MCF 10A (cell line): ENCODE measurements at regions of chr1 and their contacts with region 1.

Region 1: GRCh38 chr1:156456622-156457465 is 43.7 kb downstream of the MEF2D start:
- DNase-seq: peak; percentile 100
- H3K4me3 Mint-ChIP-seq: peak overlapping the region; percentile 90
- H3K27ac Mint-ChIP-seq: peak overlapping the region; percentile 99
- H3K4me1 Mint-ChIP-seq: peaks cover 42% of the 10 kb centered on the region
- H3K27me3 Mint-ChIP-seq: no peaks in the 10 kb centered on the region
- CTCF ChIP-seq: no peak

Region 2: DNA sequence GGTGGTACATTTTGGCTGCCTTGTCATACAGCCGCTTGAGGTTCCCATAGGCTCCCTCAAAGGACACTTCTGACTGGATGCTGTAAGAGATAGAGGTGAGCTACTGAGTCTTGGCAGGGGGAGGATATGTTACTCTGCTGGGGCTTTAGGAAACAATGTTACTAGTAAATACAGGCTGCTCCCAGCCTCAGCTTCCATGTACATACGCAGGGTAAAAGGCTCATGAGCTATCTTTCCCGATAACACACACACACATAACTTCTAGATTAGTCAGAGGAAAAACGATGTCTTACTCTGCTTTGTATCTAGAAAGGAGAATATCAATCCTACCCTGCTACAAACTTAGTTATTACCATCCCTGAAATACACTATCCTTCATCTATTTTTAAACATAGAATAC is 188.5 kb before region 1 on chr1:
- CTCF ChIA-PET with region 1: no interaction called
- POLR2A ChIA-PET with region 1: no interaction called
- intact Hi-C with region 1: no loop called
- DNase-seq: no peak
- H3K4me3 Mint-ChIP-seq: no peak overlapping the region
- H3K27ac Mint-ChIP-seq: no peak overlapping the region
- H3K4me1 Mint-ChIP-seq: peaks cover 23% of the 10 kb centered on the region
- H3K27me3 Mint-ChIP-seq: no peaks in the 10 kb centered on the region
- CTCF ChIP-seq: no peak

Region 3: DNA sequence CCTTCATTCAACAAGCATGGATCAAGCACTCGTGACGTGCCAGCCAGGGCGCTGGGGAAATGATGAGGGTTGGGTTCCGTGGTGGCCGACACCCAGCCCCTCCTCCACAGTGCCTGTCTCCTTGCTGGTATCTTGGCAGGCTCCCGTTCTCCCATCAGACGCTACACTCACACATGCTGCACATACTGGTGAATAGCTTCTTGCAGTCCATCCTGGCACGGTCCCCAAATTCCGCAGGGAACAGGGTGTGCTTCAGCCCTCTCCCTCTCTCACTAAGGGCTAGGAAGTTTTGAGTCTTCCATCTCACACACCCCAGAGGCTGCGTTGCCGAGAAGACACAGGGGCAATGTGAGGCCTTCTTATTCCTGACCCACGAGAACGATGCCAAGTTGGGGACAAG is 53.9 kb after region 1 on chr1:
- CTCF ChIA-PET with region 1: interaction called, 79 read pairs
- POLR2A ChIA-PET with region 1: interaction called, 549 read pairs
- intact Hi-C with region 1: loop called (anchors 1 kb)
- DNase-seq: peak; percentile 98
- H3K4me3 Mint-ChIP-seq: peak overlapping the region; percentile 42
- H3K27ac Mint-ChIP-seq: peak overlapping the region; percentile 77
- H3K4me1 Mint-ChIP-seq: peaks cover 49% of the 10 kb centered on the region
- H3K27me3 Mint-ChIP-seq: no peaks in the 10 kb centered on the region
- CTCF ChIP-seq: no peak

Region 4: DNA sequence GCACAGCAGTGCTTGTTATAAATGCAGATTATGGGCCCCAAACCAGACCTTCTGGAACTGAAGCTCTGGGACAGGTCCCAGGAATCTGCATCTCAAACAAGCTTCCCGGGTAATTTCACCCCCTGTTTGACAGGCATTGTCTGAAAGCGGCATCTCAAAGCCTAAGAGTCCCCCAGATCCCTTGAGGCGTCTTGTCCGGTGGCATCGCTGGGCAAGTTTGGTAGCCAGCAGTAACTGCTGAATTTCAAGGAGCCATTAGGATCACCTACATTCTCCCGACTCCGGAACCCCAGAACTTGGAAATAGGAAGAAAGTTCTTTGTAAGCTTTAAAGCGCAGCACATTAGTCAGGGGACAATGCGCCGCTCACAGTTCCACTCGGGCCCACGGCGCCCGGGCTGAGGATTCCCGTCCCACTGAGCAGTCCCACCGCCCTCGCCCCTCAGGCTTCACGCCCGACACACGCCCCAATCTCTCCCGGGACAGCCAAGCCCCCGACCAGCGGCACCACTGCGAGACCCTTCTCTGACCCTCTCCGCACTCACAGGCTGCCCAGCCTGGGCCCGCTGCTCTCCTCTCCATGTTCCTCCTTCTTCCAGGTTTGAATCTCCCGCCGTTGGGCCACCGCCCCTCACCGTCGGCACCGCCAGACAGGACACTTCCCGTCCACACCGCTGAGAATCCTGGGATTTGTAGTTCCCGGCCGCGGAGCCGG is 115.3 kb after region 1 on chr1 and contains the start of gene IQGAP3:
- CTCF ChIA-PET with region 1: interaction called, 4 read pairs
- POLR2A ChIA-PET with region 1: interaction called, 3 read pairs
- intact Hi-C with region 1: loop called (anchors 1 kb)
- DNase-seq: peak; percentile 94
- H3K4me3 Mint-ChIP-seq: peak within 1 kb of the TSS; percentile 87
- H3K27ac Mint-ChIP-seq: peak within 1 kb of the TSS; percentile 70
- H3K4me1 Mint-ChIP-seq: peaks cover 28% of the 10 kb centered on the region
- H3K27me3 Mint-ChIP-seq: peaks cover 11% of the 10 kb centered on the region
- CTCF ChIP-seq: no peak
- total RNA-seq, gene IQGAP3: 36.4 and 48.3 TPM in 2 replicates

Region 5: DNA sequence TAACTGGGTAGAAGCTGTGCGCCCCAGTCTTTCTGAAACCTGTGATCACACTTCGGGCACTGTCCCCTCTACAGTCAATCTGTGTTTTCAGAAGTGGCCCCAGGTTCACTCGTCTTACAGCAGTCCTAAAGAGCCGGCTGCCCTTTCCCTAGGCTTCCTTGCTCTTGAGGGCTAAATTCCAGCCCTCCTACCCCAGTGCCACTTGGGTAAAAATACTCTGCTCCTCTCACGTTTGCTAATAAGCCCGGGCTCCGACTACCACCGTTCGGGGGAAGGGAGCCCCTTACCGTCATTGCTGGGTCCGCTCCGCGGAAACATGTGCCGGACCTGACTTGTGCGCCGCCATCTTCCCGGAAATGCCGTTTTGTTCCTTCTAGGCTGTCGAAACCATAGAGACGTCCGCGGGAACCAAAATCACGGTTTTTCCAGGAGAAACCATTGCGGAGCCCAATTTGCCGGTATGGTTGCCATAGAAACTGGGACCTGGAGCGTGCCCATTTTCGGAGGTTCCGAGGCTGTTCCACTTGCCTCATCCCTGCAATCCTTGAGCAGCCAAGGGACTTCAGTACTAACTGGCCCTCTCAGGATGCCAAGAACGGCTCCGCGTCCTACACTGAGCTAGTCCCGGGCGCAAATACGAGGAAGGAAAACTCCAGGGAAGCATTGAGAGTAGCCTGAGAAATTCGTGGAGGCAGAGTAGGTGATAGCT is 144.4 kb after region 1 on chr1 and contains the start of gene GPATCH4:
- CTCF ChIA-PET with region 1: interaction called, 8 read pairs
- POLR2A ChIA-PET with region 1: interaction called, 20 read pairs
- intact Hi-C with region 1: loop called (anchors 2 kb)
- DNase-seq: peak; percentile 94
- H3K4me3 Mint-ChIP-seq: peak within 1 kb of the TSS; percentile 86
- H3K27ac Mint-ChIP-seq: peak within 1 kb of the TSS; percentile 94
- H3K4me1 Mint-ChIP-seq: peaks cover 18% of the 10 kb centered on the region
- H3K27me3 Mint-ChIP-seq: no peaks in the 10 kb centered on the region
- CTCF ChIP-seq: no peak
- total RNA-seq, gene GPATCH4: 67.3 and 107 TPM in 2 replicates

Region 6: GRCh38 chr1:156667610-156667967 is 210.7 kb after region 1 on chr1:
- CTCF ChIA-PET with region 1: no interaction called
- POLR2A ChIA-PET with region 1: no interaction called
- intact Hi-C with region 1: no loop called
- DNase-seq: no peak
- H3K4me3 Mint-ChIP-seq: no peak overlapping the region
- H3K27ac Mint-ChIP-seq: no peak overlapping the region
- H3K4me1 Mint-ChIP-seq: peaks cover 16% of the 10 kb centered on the region
- H3K27me3 Mint-ChIP-seq: peaks cover 22% of the 10 kb centered on the region
- CTCF ChIP-seq: no peak